ENCODE measurements at regions of chr16 and their contacts with region 1.

Region 1: DNA sequence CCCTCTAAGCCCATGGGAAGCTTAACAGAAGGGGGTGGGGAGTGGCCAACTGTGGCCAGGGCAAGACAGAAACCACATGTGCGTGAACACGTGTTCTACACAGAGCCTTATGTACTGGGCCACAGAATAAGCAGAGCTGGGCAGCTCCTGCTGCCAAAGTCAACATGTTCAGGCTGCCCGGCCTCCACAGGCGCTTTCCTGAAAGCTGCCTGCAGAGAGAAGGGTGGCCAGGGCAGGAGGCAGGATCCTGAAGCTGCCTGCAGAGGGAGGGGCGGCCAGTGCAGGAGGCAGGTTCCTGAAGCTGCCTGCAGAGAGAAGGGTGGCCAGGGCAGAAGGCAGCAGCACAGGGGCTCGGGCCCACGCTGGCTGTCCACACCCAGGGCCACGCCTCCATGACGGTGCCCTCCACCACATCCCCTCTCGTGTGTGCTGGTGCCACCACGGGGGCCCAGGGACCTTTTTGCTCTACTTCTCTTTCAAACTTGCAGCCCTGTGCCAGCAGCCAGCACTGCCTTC is 79.5 kb downstream of the ANKRD11 start:
- DNase-seq: peak in 5 of 14 experiments; percentile 28 to 54 (median 34)
- ATAC-seq: no peak
- H3K4me3 ChIP-seq: no peak overlapping the region
- H3K4me3 Mint-ChIP-seq: peak overlapping the region; percentile 54
- H3K27ac ChIP-seq: peak overlapping the region; percentile 34 to 69
- H3K27ac Mint-ChIP-seq: peak overlapping the region; percentile 95
- H3K4me1 ChIP-seq: peaks cover 92% of the 10 kb centered on the region
- H3K4me1 Mint-ChIP-seq: peaks cover 87% of the 10 kb centered on the region
- H3K27me3 ChIP-seq: no peaks in the 10 kb centered on the region
- H3K27me3 Mint-ChIP-seq: no peaks in the 10 kb centered on the region
- CTCF ChIP-seq: no peak

Region 2: DNA sequence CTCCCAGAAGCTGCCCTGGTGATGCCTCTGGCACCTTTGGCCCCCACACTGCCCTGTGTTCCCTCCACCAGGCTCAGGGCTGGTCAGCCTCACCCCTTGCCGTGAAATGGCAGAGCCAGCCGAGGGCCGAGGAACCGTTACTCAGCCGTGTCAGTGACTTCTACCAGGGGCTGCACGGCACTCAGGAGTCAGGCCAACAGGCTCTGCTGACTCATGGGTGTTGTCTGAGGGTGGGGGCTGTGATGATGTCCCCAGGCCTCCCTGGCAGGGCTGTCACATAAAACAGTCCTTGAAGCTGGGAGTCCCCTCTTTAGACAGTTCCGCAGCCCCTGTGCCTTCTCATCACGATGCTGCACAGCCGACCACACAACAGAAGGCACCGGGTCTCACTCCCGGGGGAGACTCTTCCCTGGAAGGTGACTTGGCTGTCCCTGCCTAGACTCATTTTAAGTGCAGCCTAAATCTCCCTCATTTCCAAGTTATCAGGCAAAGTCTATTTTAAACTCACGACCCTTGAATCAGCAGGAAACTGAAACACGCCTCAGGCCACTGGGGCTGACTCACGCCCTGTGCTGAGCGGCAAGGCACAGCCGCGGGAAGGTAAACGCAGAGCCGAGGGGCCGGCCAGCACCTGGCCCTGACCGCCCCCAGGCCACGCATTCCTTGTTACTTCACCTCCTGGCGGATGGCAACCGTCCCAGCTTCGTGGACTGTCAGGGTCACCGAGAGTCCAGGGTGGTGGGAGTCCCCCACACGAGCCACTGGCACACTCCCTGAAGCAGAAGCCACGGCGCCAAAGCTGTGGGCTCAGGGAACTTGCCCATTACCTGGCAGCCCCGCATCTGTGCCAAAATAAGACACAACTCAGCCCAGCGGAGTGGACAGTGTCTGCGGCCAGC is 90.7 kb before region 1 on chr16:
- CTCF ChIA-PET with region 1: interaction called, 3 read pairs
- POLR2A ChIA-PET with region 1: interaction called, 15 read pairs
- intact Hi-C with region 1: no loop called
- DNase-seq: peak in 5 of 14 experiments; percentile 21 to 55 (median 45)
- ATAC-seq: no peak
- H3K4me3 ChIP-seq: no peak overlapping the region
- H3K4me3 Mint-ChIP-seq: peak overlapping the region; percentile 38
- H3K27ac ChIP-seq: no peak overlapping the region
- H3K27ac Mint-ChIP-seq: peak overlapping the region; percentile 98
- H3K4me1 ChIP-seq: peaks cover 100% of the 10 kb centered on the region
- H3K4me1 Mint-ChIP-seq: peaks cover 91% of the 10 kb centered on the region
- H3K27me3 ChIP-seq: no peaks in the 10 kb centered on the region
- H3K27me3 Mint-ChIP-seq: no peaks in the 10 kb centered on the region
- CTCF ChIP-seq: no peak

Region 3: DNA sequence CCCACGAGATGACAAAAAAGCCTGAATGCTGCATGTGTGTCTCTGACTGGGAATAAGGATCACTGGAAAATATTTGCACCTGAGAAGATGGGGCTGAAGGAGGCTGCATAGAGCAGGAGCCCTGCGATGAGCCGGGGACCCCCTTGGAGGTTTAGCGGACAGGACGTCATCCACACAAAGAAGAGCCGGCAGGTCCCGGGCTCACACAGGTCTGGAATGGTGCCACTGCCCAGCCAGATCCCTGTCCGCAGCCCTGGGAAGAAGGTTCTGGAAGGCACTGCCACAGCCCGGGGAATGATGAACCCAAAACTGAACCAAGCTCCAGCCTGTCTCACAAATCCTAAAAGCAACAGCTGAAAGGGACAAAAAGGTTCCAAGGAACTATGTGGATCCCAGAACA is 22.3 kb before region 1 on chr16:
- CTCF ChIA-PET with region 1: interaction called, 4 read pairs
- POLR2A ChIA-PET with region 1: no interaction called
- intact Hi-C with region 1: loop called in 1 of 2 experiments (anchors 2 kb)
- DNase-seq: no peak
- ATAC-seq: no peak
- H3K4me3 ChIP-seq: no peak overlapping the region
- H3K4me3 Mint-ChIP-seq: peak overlapping the region; percentile 62
- H3K27ac ChIP-seq: no peak overlapping the region
- H3K27ac Mint-ChIP-seq: peak overlapping the region; percentile 80
- H3K4me1 ChIP-seq: peaks cover 61% of the 10 kb centered on the region
- H3K4me1 Mint-ChIP-seq: peaks cover 76% of the 10 kb centered on the region
- H3K27me3 ChIP-seq: no peaks in the 10 kb centered on the region
- H3K27me3 Mint-ChIP-seq: no peaks in the 10 kb centered on the region
- CTCF ChIP-seq: no peak

Region 4: DNA sequence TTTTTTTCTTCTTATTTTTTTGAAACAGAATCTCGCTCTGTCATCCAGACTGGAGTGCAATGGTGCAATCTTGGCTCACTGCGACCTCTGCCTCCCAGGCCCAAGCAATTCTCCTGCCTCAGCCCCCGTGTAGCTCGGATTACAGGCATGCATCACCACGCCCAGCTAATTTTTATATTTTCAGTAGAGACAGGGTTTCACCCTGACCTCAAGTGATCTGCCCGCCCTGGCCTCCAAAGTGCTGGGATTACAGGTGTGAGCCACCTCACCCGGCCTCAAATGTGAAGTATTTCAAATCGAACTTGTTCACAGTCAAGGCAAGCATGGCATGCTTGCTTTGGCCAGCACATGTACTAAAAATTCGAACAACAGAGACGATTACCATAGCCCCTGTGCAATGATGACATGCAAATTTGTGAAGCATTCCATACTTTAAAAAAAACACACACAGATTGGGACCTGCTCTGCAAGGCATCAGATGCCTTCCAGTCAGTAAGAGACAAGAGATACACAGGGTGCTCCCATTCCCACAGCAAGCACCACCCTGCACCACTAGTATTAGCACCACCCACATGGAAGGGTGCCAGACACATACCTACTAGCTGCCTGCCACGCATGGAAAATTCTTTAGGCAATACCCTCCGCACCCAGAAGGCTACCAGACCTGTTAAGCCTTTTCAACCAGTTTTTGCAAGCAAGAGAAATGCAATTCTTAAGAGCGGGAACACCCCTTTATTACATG is 32.3 kb after region 1 on chr16:
- CTCF ChIA-PET with region 1: no interaction called
- POLR2A ChIA-PET with region 1: interaction called, 3 read pairs
- intact Hi-C with region 1: loop called in 1 of 2 experiments (anchors 5 kb)
- DNase-seq: peak in 2 of 14 experiments; percentile 28 to 43
- ATAC-seq: peak; percentile 33
- H3K4me3 ChIP-seq: no peak overlapping the region
- H3K4me3 Mint-ChIP-seq: peak overlapping the region; percentile 75
- H3K27ac ChIP-seq: no peak overlapping the region
- H3K27ac Mint-ChIP-seq: peak overlapping the region; percentile 48
- H3K4me1 ChIP-seq: peaks cover 92% of the 10 kb centered on the region
- H3K4me1 Mint-ChIP-seq: peaks cover 22% of the 10 kb centered on the region
- H3K27me3 ChIP-seq: no peaks in the 10 kb centered on the region
- H3K27me3 Mint-ChIP-seq: no peaks in the 10 kb centered on the region
- CTCF ChIP-seq: no peak

Region 5: DNA sequence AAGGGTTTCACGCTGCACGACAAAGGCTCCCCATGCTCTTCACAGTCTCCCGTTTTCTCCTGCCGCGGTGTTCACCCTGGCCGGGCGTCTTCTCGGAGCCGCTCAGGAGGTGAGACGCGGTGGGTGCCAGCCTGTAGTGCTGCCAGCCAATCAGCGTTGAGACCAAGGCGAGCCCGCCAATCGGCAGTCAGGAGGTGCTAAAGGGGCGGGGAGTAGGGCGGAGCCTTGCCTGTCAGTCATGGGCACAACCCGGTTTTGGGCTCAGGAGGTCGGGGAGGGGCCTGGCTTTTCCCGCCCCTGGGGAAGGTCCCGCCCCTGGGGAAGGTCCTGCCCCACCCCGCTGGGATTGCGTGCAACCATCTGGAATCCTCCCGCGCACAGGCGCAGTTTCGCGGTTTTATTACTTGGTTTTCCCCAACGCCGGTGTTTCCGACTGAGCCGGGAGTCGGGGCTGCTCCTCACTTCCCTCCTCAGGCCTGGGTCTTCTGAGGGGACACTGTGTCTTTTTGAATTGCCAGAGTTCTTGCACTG is 666.4 kb after region 1 on chr16 and contains the start of gene PRDM7:
- CTCF ChIA-PET with region 1: no interaction called
- POLR2A ChIA-PET with region 1: no interaction called
- intact Hi-C with region 1: no loop called
- DNase-seq: peak; percentile 87 to 99 (median 95)
- ATAC-seq: peak; percentile 91
- H3K4me3 ChIP-seq: peak within 1 kb of the TSS; percentile 64
- H3K4me3 Mint-ChIP-seq: peak within 1 kb of the TSS; percentile 90
- H3K27ac ChIP-seq: no peak within 1 kb of the TSS
- H3K27ac Mint-ChIP-seq: peak within 1 kb of the TSS; percentile 78
- H3K4me1 ChIP-seq: peaks cover 29% of the 10 kb centered on the region
- H3K4me1 Mint-ChIP-seq: peaks cover 31% of the 10 kb centered on the region
- H3K27me3 ChIP-seq: no peaks in the 10 kb centered on the region
- H3K27me3 Mint-ChIP-seq: peaks cover 14% of the 10 kb centered on the region
- CTCF ChIP-seq: no peak
- total RNA-seq, gene PRDM7: not detected

Measured in CD4-positive, alpha-beta T cell (primary cell).